H1 (cell line): ENCODE measurements at regions of chr17 and their contacts with region 1.

Region 1: GRCh38 chr17:40021451-40021971 is 6.3 kb downstream of the CSF3 start:
- DNase-seq: no peak
- H3K4me3 ChIP-seq: no peak overlapping the region
- H3K27ac ChIP-seq: no peak overlapping the region
- H3K4me1 ChIP-seq: peaks cover 0 to 24% (median 16%) of the 10 kb centered on the region in 4 experiments; a peak in 6 of 7 replicates
- H3K27me3 ChIP-seq: no peaks in the 10 kb centered on the region
- CTCF ChIP-seq: no peak
- EP300 ChIP-seq: no peak
- POLR2A ChIP-seq: no peak
- RAD21 ChIP-seq: no peak

Region 2: DNA sequence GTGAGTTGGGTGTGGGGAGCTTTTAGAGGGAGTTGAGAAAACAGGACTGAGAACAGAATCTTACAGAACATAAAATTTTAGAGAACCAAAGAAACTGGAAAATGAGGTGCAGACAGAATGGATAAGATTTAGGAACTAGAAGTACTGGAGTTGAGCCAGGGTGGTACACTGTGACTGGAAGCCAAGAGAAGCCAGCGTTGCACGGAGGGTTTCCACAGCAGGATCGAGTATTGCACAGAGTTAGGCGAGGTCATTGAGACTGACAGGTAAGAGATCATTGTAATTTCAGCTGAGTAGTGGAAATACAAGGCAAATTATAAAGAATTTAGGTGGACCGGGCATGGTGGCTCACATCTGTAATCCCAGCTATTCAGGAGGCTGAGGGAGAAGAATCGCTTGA is 52.1 kb before region 1 on chr17:
- CTCF ChIA-PET with region 1: no interaction called
- POLR2A ChIA-PET with region 1: no interaction called
- DNase-seq: no peak
- H3K4me3 ChIP-seq: no peak overlapping the region
- H3K27ac ChIP-seq: no peak overlapping the region
- H3K4me1 ChIP-seq: no peaks in the 10 kb centered on the region
- H3K27me3 ChIP-seq: peaks cover 0 to 3% (median 1%) of the 10 kb centered on the region in 4 experiments; a peak in 3 of 7 replicates
- CTCF ChIP-seq: no peak
- EP300 ChIP-seq: no peak
- POLR2A ChIP-seq: no peak
- RAD21 ChIP-seq: no peak

Region 3: GRCh38 chr17:39999067-39999466 is 22.4 kb before region 1 on chr17:
- CTCF ChIA-PET with region 1: interaction called, 11 read pairs
- POLR2A ChIA-PET with region 1: interaction called, 13 read pairs
- DNase-seq: no peak
- H3K4me3 ChIP-seq: no peak overlapping the region
- H3K27ac ChIP-seq: no peak overlapping the region
- H3K4me1 ChIP-seq: no peaks in the 10 kb centered on the region
- H3K27me3 ChIP-seq: no peaks in the 10 kb centered on the region
- CTCF ChIP-seq: no peak
- EP300 ChIP-seq: no peak
- POLR2A ChIP-seq: no peak
- RAD21 ChIP-seq: no peak

Region 4: GRCh38 chr17:40005520-40005919 is 16.0 kb before region 1 on chr17:
- CTCF ChIA-PET with region 1: interaction called, 428 read pairs
- POLR2A ChIA-PET with region 1: interaction called, 13 read pairs
- DNase-seq: no peak
- H3K4me3 ChIP-seq: no peak overlapping the region
- H3K27ac ChIP-seq: no peak overlapping the region
- H3K4me1 ChIP-seq: no peaks in the 10 kb centered on the region
- H3K27me3 ChIP-seq: no peaks in the 10 kb centered on the region
- CTCF ChIP-seq: no peak
- EP300 ChIP-seq: no peak
- POLR2A ChIP-seq: no peak
- RAD21 ChIP-seq: no peak

Region 5: DNA sequence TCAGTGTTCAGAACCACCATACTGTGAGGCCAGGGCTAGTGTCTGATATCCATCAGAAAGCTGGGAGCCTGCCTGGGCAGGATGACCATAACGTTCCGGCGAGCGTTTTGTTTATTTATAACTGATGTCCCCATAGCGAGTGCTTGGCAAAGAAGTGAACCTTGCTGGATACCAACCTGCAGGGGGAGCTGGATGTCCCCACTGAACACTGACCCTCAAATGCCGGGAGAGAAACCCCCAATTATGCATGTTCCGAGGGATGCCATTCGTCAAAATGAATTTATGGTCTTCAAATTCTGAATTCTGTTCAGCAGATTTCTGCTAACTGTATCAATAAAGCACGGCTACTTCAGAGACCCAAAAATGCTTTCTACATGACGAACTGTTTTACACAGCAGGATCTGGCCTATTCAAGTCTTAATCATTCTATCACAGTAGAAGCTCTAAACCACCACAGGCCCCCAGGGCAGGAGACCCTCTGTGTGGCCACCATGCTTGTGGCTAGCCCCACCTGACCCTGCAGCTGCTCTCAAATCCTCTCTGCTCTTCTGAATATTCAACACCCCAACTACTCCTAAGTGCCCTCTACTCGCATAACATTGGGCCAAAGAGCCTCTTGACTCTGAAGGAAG is 17.5 kb after region 1 on chr17:
- CTCF ChIA-PET with region 1: interaction called, 428 read pairs
- POLR2A ChIA-PET with region 1: interaction called, 10 read pairs
- DNase-seq: peak in 1 of 2 experiments; percentile 64
- H3K4me3 ChIP-seq: no peak overlapping the region
- H3K27ac ChIP-seq: no peak overlapping the region
- H3K4me1 ChIP-seq: peaks cover 0 to 12% (median 4%) of the 10 kb centered on the region in 4 experiments; a peak in 5 of 7 replicates
- H3K27me3 ChIP-seq: no peaks in the 10 kb centered on the region
- CTCF ChIP-seq: peak; percentile 69 to 78 (median 72)
- EP300 ChIP-seq: no peak
- POLR2A ChIP-seq: no peak
- RAD21 ChIP-seq: peak; percentile 49 to 70

Region 6: DNA sequence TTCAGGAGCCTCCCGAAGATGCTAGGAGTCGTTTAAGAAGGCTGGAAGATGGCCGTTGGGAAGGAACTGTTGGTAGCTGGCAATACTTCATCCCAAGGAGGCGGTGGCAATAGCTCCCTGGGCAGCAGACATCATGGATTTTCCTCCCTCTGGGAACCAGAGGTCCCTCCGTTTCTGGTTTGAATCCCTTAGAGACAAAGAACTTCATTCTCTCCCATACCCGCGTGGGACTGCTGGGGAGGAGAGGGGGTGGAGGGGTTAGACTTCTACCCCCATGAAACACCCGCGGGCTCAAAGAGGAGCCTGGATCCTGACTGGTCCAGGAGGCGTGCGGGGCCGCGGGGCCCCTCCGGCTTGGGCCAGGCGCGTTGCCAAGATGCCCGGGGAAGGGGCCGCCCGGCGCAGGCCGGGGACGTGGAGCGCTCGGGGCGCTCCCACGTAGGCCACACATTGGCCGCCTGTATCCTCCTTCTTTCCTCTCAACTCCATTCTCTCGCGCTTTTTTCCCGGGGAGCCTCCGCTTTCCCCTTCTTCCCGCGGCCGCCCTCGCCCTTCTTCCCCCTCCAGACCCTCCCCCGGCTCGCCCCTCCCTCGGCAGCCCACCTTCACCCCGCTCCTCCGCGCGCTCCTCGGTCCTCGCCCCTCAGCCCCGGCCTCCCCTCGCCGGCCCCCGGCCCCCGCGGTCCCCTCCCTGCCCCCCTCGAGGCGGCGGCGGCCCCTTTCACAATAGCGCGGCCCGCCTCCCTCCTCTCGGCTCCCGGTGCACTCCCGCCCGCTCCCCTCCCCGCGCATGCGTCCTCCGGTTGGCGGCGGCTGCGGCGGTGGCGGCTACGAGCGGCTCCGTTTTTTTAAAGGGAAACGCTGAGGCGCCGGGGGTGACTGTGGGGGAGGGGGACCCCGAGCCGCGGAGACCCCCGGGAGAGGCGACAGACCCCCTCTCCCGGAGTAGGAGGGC is 99.9 kb after region 1 on chr17 and contains the start of gene MSL1:
- CTCF ChIA-PET with region 1: interaction called, 128 read pairs
- POLR2A ChIA-PET with region 1: interaction called, 13 read pairs
- DNase-seq: peak in 1 of 2 experiments; percentile 88
- H3K4me3 ChIP-seq: peak within 1 kb of the TSS; percentile 80 to 91 (median 86)
- H3K27ac ChIP-seq: peak within 1 kb of the TSS; percentile 84
- H3K4me1 ChIP-seq: peaks cover 0 to 3% (median under 1%) of the 10 kb centered on the region in 4 experiments; a peak in 2 of 7 replicates
- H3K27me3 ChIP-seq: no peaks in the 10 kb centered on the region; a peak in 1 of 7 replicates
- CTCF ChIP-seq: no peak
- EP300 ChIP-seq: 0 out of 3 replicates have a peak, but pooled peaks of 1 of the 2 experiments have one; percentile 8
- POLR2A ChIP-seq: peak in 1 of 2 experiments; percentile 37; a peak in 1 of 3 replicates
- RAD21 ChIP-seq: no peak
- total RNA-seq, gene MSL1: 66.5 and 69.2 TPM in 2 replicates